ENCODE measurements at regions of chr2 and their contacts with region 1.

Region 1: GRCh38 chr2:239706367-239706766 is 305.5 kb upstream of the HDAC4 start:
- DNase-seq: no peak
- H3K4me3 ChIP-seq: no peak overlapping the region
- H3K27ac ChIP-seq: no peak overlapping the region
- H3K4me1 ChIP-seq: peaks cover 0 to 4% (median 0%) of the 10 kb centered on the region in 4 donors
- H3K27me3 ChIP-seq: no peaks in the 10 kb centered on the region
- CTCF ChIP-seq: no peak
- EP300 ChIP-seq: no peak
- POLR2A ChIP-seq: no peak

Region 2: DNA sequence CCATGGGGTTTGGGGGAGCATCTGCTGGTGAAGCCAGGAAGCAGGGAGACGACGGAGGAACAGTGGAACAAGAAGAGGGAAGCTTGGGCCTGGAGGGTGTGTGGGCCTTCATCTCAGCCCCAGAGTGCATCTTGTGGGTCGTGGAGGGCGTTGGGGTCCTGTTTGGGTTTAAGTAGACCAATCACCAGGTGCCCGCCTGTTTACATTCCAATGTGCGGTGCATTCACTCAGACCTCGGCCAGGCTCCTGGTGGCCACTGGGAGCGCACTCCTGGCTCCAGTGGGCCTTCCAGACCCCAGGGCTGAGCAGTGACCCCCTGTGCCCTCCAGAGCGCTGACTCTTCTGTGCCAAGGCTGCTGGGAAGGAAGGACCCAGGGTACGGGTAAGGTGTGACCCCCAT is 25.1 kb after region 1 on chr2:
- in situ Hi-C with region 1: no loop called
- intact Hi-C with region 1: loop called (anchors 2 kb)
- DNase-seq: no peak
- H3K4me3 ChIP-seq: no peak overlapping the region
- H3K27ac ChIP-seq: no peak overlapping the region
- H3K4me1 ChIP-seq: no peaks in the 10 kb centered on the region
- H3K27me3 ChIP-seq: no peaks in the 10 kb centered on the region
- CTCF ChIP-seq: no peak
- EP300 ChIP-seq: no peak
- POLR2A ChIP-seq: no peak

Region 3: DNA sequence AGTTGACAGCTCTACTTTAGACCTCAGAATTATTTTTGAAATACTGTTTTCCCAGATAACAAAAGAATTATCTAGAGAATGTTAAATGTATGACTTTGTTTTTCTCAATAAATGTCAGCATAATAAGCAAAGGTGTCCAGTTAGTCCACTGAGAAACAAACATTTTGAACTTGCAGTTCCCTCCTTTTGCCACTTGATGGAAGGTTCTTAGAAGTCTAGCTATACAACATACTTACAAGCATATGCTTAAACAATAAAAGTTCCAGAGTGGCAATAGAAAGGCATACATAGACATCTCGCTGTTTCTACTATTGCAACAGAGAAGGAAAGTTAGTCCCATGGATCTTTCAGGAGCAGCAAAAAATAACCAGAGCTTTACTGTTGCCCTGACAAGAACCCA is 307.0 kb after region 1 on chr2:
- in situ Hi-C with region 1: no loop called
- intact Hi-C with region 1: no loop called
- DNase-seq: no peak
- H3K4me3 ChIP-seq: no peak overlapping the region
- H3K27ac ChIP-seq: no peak overlapping the region
- H3K4me1 ChIP-seq: no peaks in the 10 kb centered on the region
- H3K27me3 ChIP-seq: no peaks in the 10 kb centered on the region
- CTCF ChIP-seq: peak in 3 of 5 experiments; percentile 12 to 20 (median 15)
- EP300 ChIP-seq: no peak
- POLR2A ChIP-seq: no peak